Right lobe of liver (tissue), 6 donors: ENCODE measurements at regions of chr17 and their contacts with region 1.

Region 1: DNA sequence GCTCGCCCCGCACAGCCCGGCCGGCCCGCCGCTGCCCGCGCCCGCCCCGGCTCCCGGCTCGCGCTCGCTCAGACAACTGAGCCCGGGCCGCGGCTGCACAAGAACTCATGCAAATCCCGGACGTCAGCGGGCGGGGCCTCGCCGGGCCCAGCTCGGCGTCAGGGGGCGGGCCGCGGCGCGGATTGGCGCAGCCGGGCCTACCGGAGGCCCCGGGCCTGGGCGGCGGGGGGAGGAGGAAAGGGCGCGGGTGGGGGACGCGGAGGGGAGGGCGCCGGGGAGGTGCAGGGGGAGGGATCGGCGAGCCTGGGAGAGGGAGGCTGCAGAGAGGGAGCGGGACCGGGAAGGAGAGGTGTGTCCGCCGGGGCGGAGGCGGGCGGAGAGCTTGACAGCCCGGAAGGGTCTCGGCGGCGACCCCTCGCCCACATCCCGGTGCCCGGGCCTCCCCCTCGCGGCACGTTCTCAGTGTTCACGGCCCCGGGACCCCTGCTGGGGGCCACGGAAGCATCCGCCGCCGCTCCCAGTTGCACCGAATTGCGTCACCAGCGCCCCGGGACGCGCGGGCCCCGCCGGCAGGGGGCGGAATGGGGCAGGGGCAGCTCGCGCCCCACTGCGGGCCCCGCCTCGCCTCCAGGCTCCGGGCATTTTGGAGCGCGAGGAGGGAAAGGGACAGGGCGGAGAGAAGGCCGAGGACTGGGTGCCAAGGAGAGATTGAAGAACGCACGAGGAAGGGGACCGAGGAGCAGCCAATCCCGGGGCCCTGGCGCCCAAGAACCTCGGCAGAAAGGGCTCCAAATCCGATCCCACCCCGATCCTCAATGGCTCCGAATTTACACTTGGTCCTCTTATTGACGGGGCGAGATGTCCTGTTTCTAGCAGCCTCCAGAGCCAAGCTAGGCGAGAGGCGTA is at the start of gene CBX4:
- DNase-seq: peak; percentile 98
- ATAC-seq: peak; percentile 66 to 81 (median 70)
- H3K4me3 ChIP-seq: peak within 1 kb of the TSS; percentile 68 to 71 (median 68)
- H3K27ac ChIP-seq: peak within 1 kb of the TSS; percentile 88 to 99 (median 92)
- H3K4me1 ChIP-seq: peaks cover 0 to 62% (median 15%) of the 10 kb centered on the region in 4 donors
- H3K27me3 ChIP-seq: peaks cover 0 to 8% of the 10 kb centered on the region in 2 donors
- CTCF ChIP-seq: peak; percentile 89 to 97 (median 93)
- POLR2A ChIP-seq: peak; percentile 87
- total RNA-seq, gene CBX4: 8.9 to 21.9 (median 15.1) TPM

Region 2: DNA sequence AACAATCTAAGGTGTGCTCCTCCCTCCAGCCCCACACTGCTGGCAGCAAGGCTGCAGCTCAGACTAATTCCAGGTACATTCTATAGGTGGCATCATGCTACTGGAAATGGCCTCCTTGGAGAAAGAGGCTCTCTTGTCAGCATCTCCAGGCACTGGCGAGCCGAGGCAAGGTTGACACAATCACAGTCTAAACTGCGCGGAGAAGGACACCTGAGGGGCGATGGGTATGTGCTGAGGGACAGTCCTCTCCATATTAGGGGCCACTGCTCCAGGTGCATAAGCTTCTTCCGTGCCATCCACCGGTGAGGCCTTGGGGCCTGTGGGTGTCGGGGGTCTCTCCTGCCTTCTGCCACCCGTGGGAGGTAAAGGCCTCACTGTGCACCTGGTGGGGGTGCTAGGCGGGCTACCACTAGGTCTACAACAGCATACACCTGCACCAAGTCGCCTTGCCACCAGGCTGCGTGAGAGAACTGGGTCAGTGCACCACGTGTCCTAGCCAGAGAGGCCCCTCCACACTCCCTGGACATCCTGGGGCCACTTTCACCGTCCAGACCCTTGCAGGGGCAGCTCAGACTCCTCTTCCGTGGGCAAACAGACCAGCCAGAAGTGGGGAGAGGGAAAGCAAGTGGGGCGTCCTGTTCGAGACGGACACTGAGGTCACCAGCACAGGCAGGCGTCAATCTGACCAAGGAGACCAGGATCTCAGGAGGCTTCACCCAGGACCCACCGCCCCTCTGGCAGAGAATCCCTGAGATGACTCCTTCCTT is 30.7 kb before region 1 on chr17:
- intact Hi-C with region 1: loop called in 1 of 2 experiments (anchors 5 kb)
- DNase-seq: peak in 1 of 3 donors; percentile 36
- ATAC-seq: peak; percentile 74 to 81 (median 74)
- H3K4me3 ChIP-seq: no peak overlapping the region
- H3K27ac ChIP-seq: no peak overlapping the region
- H3K4me1 ChIP-seq: peaks cover 0 to 13% (median 0%) of the 10 kb centered on the region in 4 donors
- H3K27me3 ChIP-seq: peaks cover 26 to 77% of the 10 kb centered on the region in 2 donors
- CTCF ChIP-seq: peak; percentile 37 to 57 (median 47)
- POLR2A ChIP-seq: no peak

Region 3: DNA sequence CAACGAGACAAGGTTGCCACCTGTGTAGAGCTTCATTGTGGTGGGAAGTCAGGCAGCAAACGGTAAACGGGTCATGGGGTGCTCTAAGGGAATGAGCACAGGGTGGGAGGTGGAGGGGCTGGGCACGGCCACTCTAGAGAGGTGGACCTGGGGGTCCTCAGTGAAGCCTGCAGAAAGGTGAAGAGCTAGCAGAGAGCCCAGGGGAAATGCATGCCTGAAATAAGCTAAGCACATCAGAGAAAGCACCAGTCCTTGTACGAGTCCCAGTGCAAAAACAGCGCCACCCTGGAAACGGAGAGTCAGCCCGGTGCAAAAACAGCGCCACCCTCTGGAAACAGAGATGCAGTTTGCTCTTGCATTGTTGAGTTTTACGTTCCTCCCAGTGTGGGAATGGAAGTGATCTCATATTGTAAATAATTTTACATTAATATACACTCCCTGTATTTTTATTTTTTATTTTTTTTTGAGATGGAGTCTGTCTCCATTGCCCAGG is 131.0 kb after region 1 on chr17:
- intact Hi-C with region 1: loop called in 1 of 2 experiments (anchors 10 kb)
- DNase-seq: peak in 2 of 3 donors; percentile 23 to 31
- ATAC-seq: peak in 1 of 4 donors; percentile 32
- H3K4me3 ChIP-seq: no peak overlapping the region
- H3K27ac ChIP-seq: no peak overlapping the region
- H3K4me1 ChIP-seq: no peaks in the 10 kb centered on the region
- H3K27me3 ChIP-seq: no peaks in the 10 kb centered on the region
- CTCF ChIP-seq: peak; percentile 13 to 38 (median 20)
- POLR2A ChIP-seq: no peak